SK-N-SH (cell line): ENCODE measurements at regions of chr7 and their contacts with region 1.

Region 1: DNA sequence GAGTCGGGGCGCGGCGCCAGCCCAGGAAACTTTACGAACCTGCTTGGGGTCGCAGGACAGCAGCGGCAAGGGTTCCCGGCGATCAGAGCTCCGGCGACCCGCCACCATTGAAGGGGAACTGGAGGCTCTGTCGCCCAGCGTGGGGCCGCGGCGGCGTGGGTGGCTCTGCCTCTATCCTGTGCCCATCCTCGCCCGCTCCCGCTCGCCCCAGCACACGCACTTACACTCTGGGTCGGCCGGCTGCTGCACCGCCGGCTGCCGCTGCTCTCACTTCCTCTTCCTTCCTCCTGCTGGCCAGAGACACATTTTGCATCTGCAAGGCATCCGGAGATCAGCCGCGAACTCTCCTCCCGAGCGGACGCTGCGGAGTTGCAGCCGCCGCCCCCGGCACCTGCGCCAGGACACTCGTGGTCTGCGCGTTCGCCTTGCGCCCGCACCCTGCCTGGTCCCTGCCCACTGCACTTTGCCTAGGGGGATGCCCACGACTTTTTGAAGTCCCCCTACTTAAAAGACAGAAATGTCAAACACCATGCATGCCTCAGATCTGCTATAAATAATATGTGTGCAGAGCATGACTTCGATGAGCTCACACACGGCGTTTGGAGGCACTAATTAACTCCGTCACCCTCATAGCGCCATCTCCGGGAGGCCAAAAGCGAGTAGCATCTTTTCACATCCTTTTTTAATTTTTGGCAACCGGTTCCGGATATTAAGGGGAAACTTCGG is at the start of gene ELMO1:
- DNase-seq: peak; percentile 94
- H3K4me3 ChIP-seq: peak within 1 kb of the TSS in 1 of 2 experiments; percentile 55; a peak in 2 of 4 replicates
- H3K27ac ChIP-seq: peak within 1 kb of the TSS in 1 of 2 experiments; percentile 73; a peak in 2 of 4 replicates
- H3K4me1 ChIP-seq: peaks cover 0 to 13% of the 10 kb centered on the region in 2 experiments; a peak in 2 of 4 replicates
- H3K27me3 ChIP-seq: no peaks in the 10 kb centered on the region
- CTCF ChIP-seq: no peak
- EP300 ChIP-seq: no peak; a peak in 1 of 4 replicates
- RAD21 ChIP-seq: peak; percentile 52
- polyA plus RNA-seq, gene ELMO1: 0.64 and 2.8 TPM in 2 replicates

Region 2: GRCh38 chr7:37428681-37429434 is 19.9 kb before region 1 on chr7:
- CTCF ChIA-PET with region 1: interaction called, 11 read pairs
- POLR2A ChIA-PET with region 1: no interaction called
- DNase-seq: no peak
- H3K4me3 ChIP-seq: no peak overlapping the region
- H3K27ac ChIP-seq: no peak overlapping the region
- H3K4me1 ChIP-seq: peaks cover 0 to 4% of the 10 kb centered on the region in 2 experiments; a peak in 2 of 4 replicates
- H3K27me3 ChIP-seq: no peaks in the 10 kb centered on the region
- CTCF ChIP-seq: no peak
- EP300 ChIP-seq: no peak
- RAD21 ChIP-seq: no peak

Region 3: GRCh38 chr7:37484426-37485073 is 35.8 kb after region 1 on chr7:
- CTCF ChIA-PET with region 1: interaction called, 13 read pairs
- POLR2A ChIA-PET with region 1: no interaction called
- DNase-seq: peak; percentile 45
- H3K4me3 ChIP-seq: no peak overlapping the region
- H3K27ac ChIP-seq: peak overlapping the region in 1 of 2 experiments; percentile 58; a peak in 1 of 4 replicates
- H3K4me1 ChIP-seq: peaks cover 0 to 28% of the 10 kb centered on the region in 2 experiments; a peak in 2 of 4 replicates
- H3K27me3 ChIP-seq: no peaks in the 10 kb centered on the region
- CTCF ChIP-seq: no peak
- EP300 ChIP-seq: peak in 1 of 2 experiments; percentile 38; a peak in 1 of 4 replicates
- RAD21 ChIP-seq: peak; percentile 16; the same call in 1 of the 2 replicates

Region 4: GRCh38 chr7:37516610-37517108 is 67.9 kb after region 1 on chr7:
- CTCF ChIA-PET with region 1: no interaction called
- POLR2A ChIA-PET with region 1: no interaction called
- DNase-seq: no peak
- H3K4me3 ChIP-seq: no peak overlapping the region
- H3K27ac ChIP-seq: no peak overlapping the region
- H3K4me1 ChIP-seq: no peaks in the 10 kb centered on the region
- H3K27me3 ChIP-seq: no peaks in the 10 kb centered on the region
- CTCF ChIP-seq: no peak
- EP300 ChIP-seq: no peak
- RAD21 ChIP-seq: no peak

Region 5: DNA sequence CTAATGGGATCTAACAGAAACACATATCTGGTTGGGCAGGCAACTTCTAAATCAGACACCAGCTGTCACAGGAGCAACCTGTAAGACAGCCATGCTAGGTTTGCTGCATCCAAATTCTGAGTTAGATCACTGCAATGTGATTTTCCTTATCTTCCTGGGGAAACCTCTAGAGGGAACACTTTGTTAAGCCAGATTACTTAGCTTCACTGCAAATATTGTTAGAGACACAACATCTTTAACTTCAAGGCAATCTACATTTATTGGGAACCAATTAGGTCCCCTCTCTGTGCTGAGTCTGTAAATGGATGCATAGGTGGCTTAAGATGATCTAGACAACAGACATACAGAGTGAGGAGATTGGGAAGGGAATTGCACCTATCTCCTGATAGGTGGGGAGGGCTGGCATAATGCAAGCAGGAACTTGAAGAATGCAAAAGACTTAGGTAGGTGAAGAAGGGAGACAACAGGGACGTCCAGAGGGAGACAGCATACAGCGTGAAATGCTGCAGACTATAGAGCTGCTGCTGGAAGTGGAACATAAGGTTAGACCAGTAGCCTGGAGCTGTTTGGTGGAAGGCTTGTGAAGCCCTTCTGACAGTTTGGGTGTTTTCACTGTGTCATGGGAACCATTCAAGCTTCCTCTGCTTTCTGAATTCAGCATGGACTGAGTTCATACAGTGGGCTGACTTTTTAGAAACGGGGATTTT is 109.7 kb after region 1 on chr7:
- CTCF ChIA-PET with region 1: no interaction called
- POLR2A ChIA-PET with region 1: no interaction called
- DNase-seq: no peak
- H3K4me3 ChIP-seq: no peak overlapping the region
- H3K27ac ChIP-seq: no peak overlapping the region
- H3K4me1 ChIP-seq: no peaks in the 10 kb centered on the region
- H3K27me3 ChIP-seq: no peaks in the 10 kb centered on the region
- CTCF ChIP-seq: no peak
- EP300 ChIP-seq: no peak
- RAD21 ChIP-seq: no peak; the same call in 1 of the 2 replicates